Activated naive CD4-positive, alpha-beta T cell treated with anti-CD3 and anti-CD28 coated beads for 36 hours (primary cell): ENCODE measurements at regions of chr1 and their contacts with region 1.

Region 1: DNA sequence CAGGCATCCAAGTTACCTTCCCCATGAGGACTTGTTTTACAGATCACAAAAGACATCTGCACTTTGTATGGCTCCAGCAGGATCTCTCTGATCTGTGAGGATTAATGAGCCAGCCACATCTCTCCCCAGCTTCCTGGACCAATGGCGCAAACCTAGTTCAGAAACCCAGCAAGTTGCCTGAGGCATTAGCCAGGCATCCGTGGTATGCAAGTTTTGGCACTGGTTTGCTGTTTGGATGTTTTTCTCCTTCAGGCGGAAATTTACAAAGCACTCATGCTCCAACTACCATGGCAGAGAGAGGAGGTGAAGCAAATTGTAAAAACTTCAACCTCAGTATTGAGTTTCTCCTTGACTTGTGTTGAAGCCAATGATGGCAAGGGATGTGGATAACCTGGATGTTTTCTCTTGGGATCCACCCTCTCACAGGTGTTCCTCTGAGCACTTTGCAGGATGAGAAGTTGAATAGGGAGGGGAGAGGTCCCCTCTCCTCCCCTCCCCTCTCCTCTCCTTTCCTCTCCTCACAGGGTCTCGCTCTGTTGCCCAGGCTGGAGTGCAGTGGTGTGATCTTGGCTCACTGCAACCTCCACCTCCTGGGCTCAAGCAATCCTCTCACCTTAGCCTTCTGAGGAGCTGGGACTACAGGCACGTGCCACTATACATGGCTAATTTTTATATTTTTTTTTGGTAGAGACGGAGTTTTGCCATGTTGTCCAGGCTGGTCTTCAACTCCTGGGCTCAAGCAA is 25.6 kb upstream of the ENO1 start:
- DNase-seq: no peak
- H3K4me3 Mint-ChIP-seq: no peak overlapping the region
- H3K27ac Mint-ChIP-seq: no peak overlapping the region
- H3K4me1 Mint-ChIP-seq: peaks cover 48% of the 10 kb centered on the region
- H3K27me3 Mint-ChIP-seq: no peaks in the 10 kb centered on the region

Region 2: DNA sequence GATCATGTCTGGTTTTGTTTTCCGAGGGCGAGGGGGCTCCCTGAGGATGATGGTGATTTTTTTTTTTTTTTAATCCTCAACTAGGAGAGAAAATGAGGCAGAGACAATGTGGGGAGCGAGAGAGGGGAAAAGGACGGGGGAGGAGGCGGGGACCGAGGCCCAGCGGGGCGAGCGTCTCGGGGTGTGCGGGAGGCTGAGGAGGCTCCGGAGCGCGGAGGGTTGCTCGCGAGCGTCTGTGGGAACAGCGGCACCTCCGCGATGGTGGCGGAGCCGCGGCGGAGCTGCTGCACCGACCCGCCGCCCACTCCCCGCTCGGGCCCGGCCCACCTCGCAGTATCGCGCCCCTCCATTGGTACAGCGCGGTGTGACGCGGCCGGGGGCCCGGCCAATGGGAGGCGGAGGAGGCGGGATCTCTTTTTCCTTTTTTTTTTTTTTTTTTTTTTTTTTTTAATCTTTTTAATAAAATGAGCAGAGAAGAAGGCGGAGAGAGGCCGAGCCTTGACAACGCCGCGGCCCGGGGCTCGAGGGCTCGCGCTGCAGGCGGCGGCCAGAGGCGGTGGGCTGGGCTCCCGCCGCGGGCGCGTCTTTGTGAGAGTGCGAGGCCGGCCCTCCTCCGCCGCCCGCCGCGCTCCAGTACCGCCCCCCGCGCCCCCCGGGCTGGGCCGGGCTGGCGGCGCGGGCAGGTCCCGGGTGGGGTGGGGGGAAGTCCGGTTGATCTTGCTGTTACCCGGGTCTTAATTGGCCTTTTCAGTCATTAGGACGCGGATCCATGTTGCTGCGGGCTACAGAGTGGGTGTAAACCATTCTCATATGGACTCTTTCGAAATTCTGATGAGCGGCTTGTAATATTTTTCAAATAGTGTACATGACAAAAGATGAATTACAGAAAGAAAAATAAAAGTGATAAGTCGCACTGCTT is 86.4 kb before region 1 on chr1 and contains the start of gene RERE:
- CTCF ChIA-PET with region 1: no interaction called
- intact Hi-C with region 1: loop called (anchors 1 kb)
- DNase-seq: peak; percentile 94
- H3K4me3 Mint-ChIP-seq: peak within 1 kb of the TSS; percentile 86
- H3K27ac Mint-ChIP-seq: peak within 1 kb of the TSS; percentile 93
- H3K4me1 Mint-ChIP-seq: peaks cover 45% of the 10 kb centered on the region
- H3K27me3 Mint-ChIP-seq: no peaks in the 10 kb centered on the region
- total RNA-seq, gene RERE: 46.4 to 47.6 TPM

Region 3: GRCh38 chr1:8858888-8859706 is 45.0 kb before region 1 on chr1:
- CTCF ChIA-PET with region 1: interaction called, 4 read pairs
- intact Hi-C with region 1: loop called (anchors 1 kb)
- DNase-seq: peak; percentile 78
- H3K4me3 Mint-ChIP-seq: no peak overlapping the region
- H3K27ac Mint-ChIP-seq: peak overlapping the region; percentile 83
- H3K4me1 Mint-ChIP-seq: peaks cover 25% of the 10 kb centered on the region
- H3K27me3 Mint-ChIP-seq: no peaks in the 10 kb centered on the region

Region 4: DNA sequence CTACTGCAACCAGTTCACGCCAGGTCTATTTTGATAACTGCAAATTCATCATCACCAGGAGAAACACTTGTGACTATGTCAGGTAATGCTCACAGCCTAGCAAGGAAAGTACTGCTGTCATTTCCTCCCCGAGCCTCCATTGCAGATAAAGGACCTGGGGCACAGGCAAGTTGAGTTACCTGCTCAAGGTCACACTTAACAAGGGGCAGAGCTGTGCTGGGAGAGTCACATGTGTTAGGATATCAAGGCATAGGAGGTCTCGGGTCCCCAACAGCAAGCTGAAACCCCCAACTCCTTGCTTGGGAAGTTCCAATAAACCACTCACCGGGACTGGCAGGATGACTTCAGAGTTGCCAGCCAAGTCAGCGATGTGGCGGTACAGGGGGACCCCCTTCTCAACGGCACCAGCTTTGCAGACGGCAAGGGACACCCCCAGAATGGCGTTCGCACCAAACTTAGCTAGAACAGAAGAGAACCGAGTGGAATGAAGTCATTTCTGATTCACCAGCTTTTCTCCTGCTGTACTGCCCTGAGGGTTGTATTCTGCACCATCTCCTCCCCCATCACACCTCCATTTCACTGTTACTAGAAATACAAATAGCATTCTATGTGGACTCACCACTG is 37.2 kb before region 1 on chr1:
- CTCF ChIA-PET with region 1: interaction called, 4 read pairs
- intact Hi-C with region 1: loop called (anchors 1 kb)
- DNase-seq: peak; percentile 87
- H3K4me3 Mint-ChIP-seq: no peak overlapping the region
- H3K27ac Mint-ChIP-seq: peak overlapping the region; percentile 96
- H3K4me1 Mint-ChIP-seq: peaks cover 73% of the 10 kb centered on the region
- H3K27me3 Mint-ChIP-seq: no peaks in the 10 kb centered on the region

Region 5: DNA sequence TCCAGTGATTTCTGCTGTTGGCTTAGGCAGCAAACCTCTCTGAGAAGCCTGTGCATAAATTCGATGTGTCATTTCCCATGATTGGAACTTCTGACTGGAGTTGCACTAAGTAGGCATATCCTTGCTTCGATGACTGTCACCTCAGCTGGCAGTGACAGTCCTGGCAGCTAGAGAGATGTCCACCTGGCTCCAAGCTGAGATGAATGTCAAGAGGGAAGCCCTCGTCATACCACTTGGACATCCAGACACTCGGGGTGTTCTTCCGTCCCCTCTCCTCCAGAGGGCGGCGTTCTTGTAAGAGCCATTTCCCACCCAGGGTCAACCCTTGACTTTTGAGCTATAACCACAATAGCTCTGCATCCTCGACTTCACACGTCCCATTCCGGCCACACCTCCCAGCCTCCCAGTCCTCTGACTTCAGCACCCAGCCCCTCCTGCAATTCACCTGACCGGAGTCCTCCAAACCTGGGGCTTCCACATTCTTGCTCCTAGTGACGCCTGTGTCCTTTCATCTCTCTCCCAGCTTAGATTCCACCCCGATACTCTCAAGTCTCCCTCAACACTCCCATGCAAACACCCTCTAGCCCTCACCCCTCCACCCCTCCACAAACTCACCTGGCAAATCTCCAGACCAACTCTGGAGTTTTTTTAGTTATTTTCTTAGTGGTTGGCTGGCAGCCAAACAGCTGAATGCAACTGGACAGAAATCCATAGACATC is 58.9 kb after region 1 on chr1:
- CTCF ChIA-PET with region 1: no interaction called
- intact Hi-C with region 1: loop called (anchors 2 kb)
- DNase-seq: peak; percentile 66
- H3K4me3 Mint-ChIP-seq: peak overlapping the region; percentile 39
- H3K27ac Mint-ChIP-seq: peak overlapping the region; percentile 84
- H3K4me1 Mint-ChIP-seq: peaks cover 87% of the 10 kb centered on the region
- H3K27me3 Mint-ChIP-seq: no peaks in the 10 kb centered on the region